ENCODE measurements at regions of chr9 and their contacts with region 1.

Region 1: GRCh38 chr9:37575921-37576721 is at the start of gene FBXO10:
- DNase-seq: peak; percentile 52 to 87 (median 72)
- H3K4me3 ChIP-seq: peak within 1 kb of the TSS; percentile 54 to 97 (median 87)
- H3K27ac ChIP-seq: peak within 1 kb of the TSS; percentile 42 to 95 (median 88)
- H3K27me3 ChIP-seq: no peaks in the 10 kb centered on the region
- CTCF ChIP-seq: peak in 20 of 56 donors; percentile 3 to 50 (median 24)
- total RNA-seq, gene FBXO10: 9.9 to 34.2 (median 24.9) TPM

Region 2: DNA sequence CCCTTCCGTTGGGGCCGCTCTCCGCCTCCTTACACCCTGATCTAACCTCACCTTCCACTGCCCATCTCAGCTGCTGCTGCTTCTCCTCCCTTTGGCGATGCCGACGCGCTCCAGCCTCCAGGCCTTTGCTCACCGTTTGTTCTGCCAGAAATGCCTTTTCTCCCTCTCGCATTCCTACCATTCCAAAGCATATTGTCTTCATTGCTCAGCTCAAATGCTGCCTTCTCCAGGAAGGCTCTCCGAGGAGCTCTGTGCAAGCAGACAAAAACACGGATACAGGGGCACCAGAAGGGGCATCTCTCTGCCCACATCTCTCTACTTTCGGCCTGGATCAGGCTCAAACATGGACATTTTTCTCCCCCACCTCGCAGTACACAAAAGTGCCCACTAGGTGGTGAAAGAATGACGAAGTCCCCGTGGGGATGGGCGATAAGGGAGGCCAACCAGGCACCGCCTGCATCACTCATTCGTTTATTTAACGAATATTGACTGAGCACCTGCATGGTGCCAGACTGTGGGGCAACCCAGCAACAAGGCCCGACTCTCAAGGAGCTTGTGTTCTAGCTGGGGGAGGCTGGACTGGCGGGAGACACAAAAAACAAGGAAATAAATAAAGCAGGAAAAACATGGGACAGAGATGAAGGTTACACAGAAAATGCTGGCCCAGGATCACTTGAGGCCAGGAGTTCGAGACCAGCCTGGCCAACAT is 161.0 kb before region 1 on chr9:
- intact Hi-C with region 1: loop called in 1 of 2 experiments (anchors 10 kb)
- DNase-seq: peak in 9 of 10 donors; percentile 45 to 80 (median 74)
- H3K4me3 ChIP-seq: peak overlapping the region in 15 of 59 donors; percentile 0 to 38 (median 19)
- H3K27ac ChIP-seq: peak overlapping the region in 57 of 59 donors; percentile 8 to 89 (median 75)
- H3K27me3 ChIP-seq: no peaks in the 10 kb centered on the region
- CTCF ChIP-seq: peak; percentile 71 to 97 (median 90)

Region 3: DNA sequence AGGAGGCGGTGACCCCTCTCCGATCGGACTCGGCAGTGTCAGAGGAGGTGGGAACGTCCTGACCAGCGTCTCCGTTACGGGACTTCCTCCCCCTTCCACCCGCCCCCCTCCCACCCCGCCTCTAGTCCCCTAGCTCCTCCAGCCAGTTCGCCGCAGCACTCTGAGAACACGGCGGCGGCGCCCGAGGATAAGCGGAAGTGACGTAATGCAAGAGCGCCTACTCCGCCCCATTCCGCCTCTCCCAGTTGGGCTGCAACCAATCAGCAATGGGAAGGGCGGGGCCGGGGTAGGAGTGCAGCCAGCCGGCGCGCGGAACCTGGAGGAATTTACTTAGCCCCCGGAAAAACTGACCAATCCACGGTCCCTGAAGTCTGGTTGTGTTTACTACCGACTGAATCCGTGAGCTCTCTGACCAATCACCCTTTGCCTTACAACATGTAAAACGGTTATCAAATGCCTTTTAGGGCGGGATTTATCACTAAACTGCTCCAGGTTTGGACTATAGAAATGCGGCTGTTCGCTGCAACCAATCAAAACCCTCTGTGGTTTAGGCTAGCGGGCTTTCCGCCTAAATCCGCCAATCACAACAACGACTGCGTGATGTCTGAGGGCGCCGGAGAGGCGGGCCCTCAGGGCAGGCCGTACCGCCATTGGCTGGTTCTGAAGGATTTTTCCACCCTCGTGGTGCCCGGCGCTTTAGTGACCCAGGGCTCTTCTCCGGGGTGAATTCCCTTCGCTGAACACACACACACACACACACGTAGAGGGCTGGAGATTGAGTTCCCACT is 110.7 kb before region 1 on chr9 and contains the start of gene ZBTB5:
- intact Hi-C with region 1: loop called in 1 of 2 experiments (anchors 10 kb)
- DNase-seq: peak; percentile 99 to 100 (median 99)
- H3K4me3 ChIP-seq: peak within 1 kb of the TSS; percentile 68 to 100 (median 95)
- H3K27ac ChIP-seq: peak within 1 kb of the TSS; percentile 55 to 99 (median 93)
- H3K27me3 ChIP-seq: no peaks in the 10 kb centered on the region
- CTCF ChIP-seq: peak in 12 of 56 donors; percentile 1 to 27 (median 13)
- total RNA-seq, gene ZBTB5: 6.8 to 16.0 (median 10.0) TPM

Region 4: GRCh38 chr9:37485389-37486219 is 90.5 kb before region 1 on chr9 and contains the start of gene POLR1E:
- intact Hi-C with region 1: loop called in 1 of 2 experiments (anchors 5 kb)
- DNase-seq: peak; percentile 82 to 97 (median 95)
- H3K4me3 ChIP-seq: peak within 1 kb of the TSS; percentile 57 to 97 (median 83)
- H3K27ac ChIP-seq: peak within 1 kb of the TSS in 37 of 59 donors; percentile 1 to 80 (median 46)
- H3K27me3 ChIP-seq: no peaks in the 10 kb centered on the region
- CTCF ChIP-seq: peak in 16 of 56 donors; percentile 7 to 46 (median 22)
- total RNA-seq, gene POLR1E: 10.9 to 24.1 (median 16.7) TPM

Region 5: DNA sequence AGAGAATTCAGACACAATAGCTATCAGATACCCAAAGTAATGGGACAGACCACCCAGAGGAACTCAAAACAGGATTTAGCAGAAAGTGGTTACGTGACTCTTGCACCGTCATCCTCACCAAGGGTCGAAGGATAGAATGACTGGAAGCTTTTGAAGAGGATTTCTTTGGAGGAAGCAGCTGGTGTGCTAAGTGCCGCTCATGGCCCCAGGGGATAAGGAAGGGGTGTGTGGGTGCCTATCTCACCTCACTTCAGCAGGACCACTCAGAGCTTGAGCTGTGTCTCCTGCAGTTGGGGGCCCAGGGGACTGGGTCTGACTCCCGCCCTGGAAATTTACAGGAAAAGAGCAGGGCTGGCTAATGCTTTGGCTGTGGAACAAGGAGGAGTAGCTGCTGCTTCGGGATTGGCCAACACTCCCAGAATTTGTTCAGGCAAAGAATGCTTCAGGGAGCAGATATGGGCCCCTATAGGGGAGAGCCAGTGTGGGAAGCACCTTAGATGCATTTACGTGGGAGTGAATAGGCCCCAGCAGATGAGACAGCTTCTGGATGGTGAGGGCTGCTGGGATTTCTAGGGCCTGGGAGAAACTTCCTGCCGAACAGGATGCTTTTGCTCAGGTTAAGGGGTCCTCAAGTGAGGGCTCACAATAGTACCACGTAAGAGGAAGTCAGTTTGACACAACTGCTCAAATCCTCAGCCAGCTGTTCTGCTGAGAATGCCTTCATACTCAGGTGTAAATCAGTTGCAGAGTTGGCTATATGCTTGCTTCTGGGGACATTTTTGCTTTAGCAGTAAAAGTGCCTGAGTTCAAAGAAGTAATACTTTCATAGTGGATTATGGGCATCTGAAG is 45.4 kb after region 1 on chr9:
- intact Hi-C with region 1: no loop called
- DNase-seq: no peak
- H3K4me3 ChIP-seq: no peak overlapping the region
- H3K27ac ChIP-seq: no peak overlapping the region
- H3K27me3 ChIP-seq: peaks cover 0 to 2% (median 0%) of the 10 kb centered on the region in 45 donors
- CTCF ChIP-seq: no peak

Region 6: GRCh38 chr9:37753489-37754190 is 177.5 kb after region 1 on chr9 and contains the start of gene TRMT10B:
- intact Hi-C with region 1: loop called in 1 of 2 experiments (anchors 5 kb)
- DNase-seq: peak; percentile 50 to 81 (median 63)
- H3K4me3 ChIP-seq: peak within 1 kb of the TSS; percentile 53 to 97 (median 86)
- H3K27ac ChIP-seq: peak within 1 kb of the TSS in 52 of 59 donors; percentile 7 to 89 (median 65)
- H3K27me3 ChIP-seq: no peaks in the 10 kb centered on the region
- CTCF ChIP-seq: peak in 30 of 56 donors; percentile 6 to 35 (median 19)
- total RNA-seq, gene TRMT10B: 7.8 to 20.2 (median 13.0) TPM

Region 7: GRCh38 chr9:37812773-37813379 is 236.8 kb after region 1 on chr9:
- intact Hi-C with region 1: no loop called
- DNase-seq: no peak
- H3K4me3 ChIP-seq: no peak overlapping the region
- H3K27ac ChIP-seq: no peak overlapping the region
- H3K27me3 ChIP-seq: no peaks in the 10 kb centered on the region
- CTCF ChIP-seq: no peak

Measured in dorsolateral prefrontal cortex (tissue), 120 donors.